Left colon (tissue), 2 donors: ENCODE measurements at regions of chr7 and their contacts with region 1.

Region 1: DNA sequence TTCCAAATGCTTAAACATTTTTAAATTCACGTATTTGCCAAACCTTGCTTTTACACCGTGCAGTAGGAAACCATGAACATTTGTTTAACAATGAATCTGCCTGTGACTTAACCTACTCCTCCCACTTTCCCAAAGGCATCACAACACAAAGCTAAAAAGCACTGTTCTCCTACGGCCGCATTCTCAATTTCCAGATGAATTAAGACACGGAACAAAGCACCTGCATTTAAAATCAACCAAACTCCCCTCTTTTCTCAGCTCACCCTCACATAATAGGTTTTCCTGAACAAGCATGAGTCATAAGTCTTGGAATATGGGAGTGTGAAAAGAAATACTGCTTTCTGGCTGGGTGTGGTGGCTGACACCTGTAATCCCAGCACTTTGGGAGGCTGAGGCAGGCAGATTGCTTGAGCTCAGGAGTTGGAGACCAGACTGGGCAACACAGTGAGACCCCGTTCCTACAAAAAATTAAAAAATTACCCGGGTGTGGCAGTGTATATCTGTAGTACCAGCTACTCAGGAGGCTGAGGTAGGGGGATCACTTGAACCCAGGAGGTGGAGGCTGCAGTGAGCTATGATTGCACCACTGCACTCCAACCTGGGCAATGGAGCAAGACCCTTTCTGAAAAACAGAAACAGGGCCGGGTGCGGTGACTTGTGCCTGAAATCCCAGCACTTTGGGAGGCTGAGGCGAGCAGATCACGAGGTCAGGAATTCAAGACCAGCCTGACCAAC is 51.7 kb upstream of the CYTH3 start:
- DNase-seq: no peak
- ATAC-seq: no peak

Region 2: GRCh38 chr7:5997222-5997808 is 326.8 kb before region 1 on chr7:
- intact Hi-C with region 1: loop called in 1 of 2 experiments (anchors 5 kb)
- DNase-seq: peak in 1 of 2 donors; percentile 68
- ATAC-seq: peak; percentile 85

Region 3: GRCh38 chr7:6160191-6160623 is 163.9 kb before region 1 on chr7:
- intact Hi-C with region 1: loop called (anchors 2 to 5 kb)
- DNase-seq: peak; percentile 43 to 44
- ATAC-seq: peak; percentile 64